ENCODE measurements at regions of chr14 and their contacts with region 1.

Region 1: GRCh38 chr14:68795597-68796417 is 2.9 kb upstream of the ZFP36L1 start:
- DNase-seq: peak; percentile 96
- ATAC-seq: peak; percentile 39
- H3K4me3 ChIP-seq: peak overlapping the region; percentile 59 to 100 (median 94)
- H3K4me3 Mint-ChIP-seq: peak overlapping the region; percentile 97
- H3K27ac ChIP-seq: peak overlapping the region; percentile 100
- H3K27ac Mint-ChIP-seq: peak overlapping the region; percentile 100
- H3K4me1 ChIP-seq: peaks cover 30 to 38% of the 10 kb centered on the region in 2 donors
- H3K4me1 Mint-ChIP-seq: peaks cover 36% of the 10 kb centered on the region
- H3K27me3 ChIP-seq: no peaks in the 10 kb centered on the region
- H3K27me3 Mint-ChIP-seq: no peaks in the 10 kb centered on the region
- CTCF ChIP-seq: peak; percentile 62

Region 2: DNA sequence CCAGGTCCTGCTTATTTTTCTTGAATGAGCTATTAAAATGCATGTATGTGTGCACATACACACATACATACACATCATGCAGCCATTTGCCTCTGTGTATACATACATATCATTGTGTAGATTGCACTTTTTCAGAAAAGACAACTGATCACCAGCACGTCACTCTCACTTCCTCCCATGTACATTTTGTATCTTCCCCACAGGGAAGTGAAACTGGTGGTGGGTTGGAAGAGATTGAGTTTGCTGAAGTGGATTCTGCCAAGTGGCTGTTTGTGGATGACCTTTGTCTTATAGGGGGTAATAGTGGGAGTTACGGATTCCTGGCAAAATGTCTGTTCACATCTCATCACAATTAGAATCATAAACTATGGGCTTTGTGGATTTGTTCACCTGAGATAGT is 527.6 kb before region 1 on chr14:
- CTCF ChIA-PET with region 1: interaction called, 4 read pairs
- POLR2A ChIA-PET with region 1: interaction called, 7 read pairs
- intact Hi-C with region 1: loop called (anchors 5 kb)
- DNase-seq: peak; percentile 92
- ATAC-seq: peak; percentile 71
- H3K4me3 ChIP-seq: peak overlapping the region in 1 of 5 experiments; percentile 14
- H3K4me3 Mint-ChIP-seq: peak overlapping the region; percentile 72
- H3K27ac ChIP-seq: peak overlapping the region; percentile 78 to 94
- H3K27ac Mint-ChIP-seq: peak overlapping the region; percentile 95
- H3K4me1 ChIP-seq: peaks cover 78 to 89% of the 10 kb centered on the region in 2 donors
- H3K4me1 Mint-ChIP-seq: peaks cover 80% of the 10 kb centered on the region
- H3K27me3 ChIP-seq: no peaks in the 10 kb centered on the region
- H3K27me3 Mint-ChIP-seq: no peaks in the 10 kb centered on the region
- CTCF ChIP-seq: no peak

Region 3: DNA sequence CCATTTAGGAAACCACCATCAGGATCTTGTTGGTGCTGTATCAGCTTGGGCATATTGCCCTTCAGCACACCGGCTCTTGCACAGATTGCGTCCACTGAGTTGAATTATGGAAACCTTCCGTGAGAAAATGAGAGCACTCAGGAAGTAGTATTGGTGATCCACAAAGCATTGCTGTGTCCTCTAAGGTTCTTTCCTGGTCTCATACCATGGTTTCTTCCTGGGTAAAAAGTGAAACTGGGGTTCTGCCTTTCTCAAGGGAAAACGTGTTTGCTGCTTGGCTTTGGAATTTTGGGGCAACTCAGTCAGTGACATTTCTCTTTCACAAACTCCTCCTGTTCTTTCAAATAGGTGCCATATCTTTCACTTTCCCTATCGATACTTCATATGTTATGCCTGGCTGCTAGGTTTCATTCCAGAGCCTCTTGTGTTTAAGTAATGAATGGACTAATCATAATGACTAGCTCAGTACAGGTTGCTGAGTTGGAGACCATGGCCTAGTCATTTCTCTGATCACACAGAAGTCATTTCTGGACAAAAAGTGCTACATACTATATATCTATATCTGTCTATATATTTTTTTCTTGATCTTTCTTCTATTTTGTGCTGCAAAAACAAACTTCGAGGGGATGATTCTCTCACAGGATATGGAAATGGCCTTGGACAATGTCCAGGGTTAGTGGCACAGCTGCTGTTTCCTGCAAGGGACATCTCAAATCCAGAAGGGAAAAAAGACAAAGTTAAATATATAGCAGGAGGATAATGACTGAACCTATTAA is 426.3 kb before region 1 on chr14:
- CTCF ChIA-PET with region 1: interaction called, 4 read pairs
- POLR2A ChIA-PET with region 1: interaction called, 8 read pairs
- intact Hi-C with region 1: loop called (anchors 5 kb)
- DNase-seq: peak; percentile 52
- ATAC-seq: peak; percentile 4
- H3K4me3 ChIP-seq: peak overlapping the region in 4 of 5 experiments; percentile 1 to 20 (median 14)
- H3K4me3 Mint-ChIP-seq: peak overlapping the region; percentile 73
- H3K27ac ChIP-seq: peak overlapping the region; percentile 78 to 84
- H3K27ac Mint-ChIP-seq: peak overlapping the region; percentile 97
- H3K4me1 ChIP-seq: peaks cover 78 to 92% of the 10 kb centered on the region in 2 donors
- H3K4me1 Mint-ChIP-seq: peaks cover 93% of the 10 kb centered on the region
- H3K27me3 ChIP-seq: no peaks in the 10 kb centered on the region
- H3K27me3 Mint-ChIP-seq: no peaks in the 10 kb centered on the region
- CTCF ChIP-seq: no peak

Region 4: GRCh38 chr14:68476212-68476907 is 319.4 kb before region 1 on chr14:
- CTCF ChIA-PET with region 1: no interaction called
- POLR2A ChIA-PET with region 1: interaction called, 15 read pairs
- intact Hi-C with region 1: no loop called
- DNase-seq: peak; percentile 89
- ATAC-seq: peak; percentile 90
- H3K4me3 ChIP-seq: peak overlapping the region in 1 of 5 experiments; percentile 21
- H3K4me3 Mint-ChIP-seq: peak overlapping the region; percentile 72
- H3K27ac ChIP-seq: peak overlapping the region; percentile 95 to 99
- H3K27ac Mint-ChIP-seq: peak overlapping the region; percentile 98
- H3K4me1 ChIP-seq: peaks cover 73 to 77% of the 10 kb centered on the region in 2 donors
- H3K4me1 Mint-ChIP-seq: peaks cover 84% of the 10 kb centered on the region
- H3K27me3 ChIP-seq: no peaks in the 10 kb centered on the region
- H3K27me3 Mint-ChIP-seq: no peaks in the 10 kb centered on the region
- CTCF ChIP-seq: no peak

Region 5: GRCh38 chr14:68718023-68718995 is 77.5 kb before region 1 on chr14:
- CTCF ChIA-PET with region 1: no interaction called
- POLR2A ChIA-PET with region 1: interaction called, 12 read pairs
- intact Hi-C with region 1: no loop called
- DNase-seq: no peak
- ATAC-seq: peak; percentile 58
- H3K4me3 ChIP-seq: no peak overlapping the region
- H3K4me3 Mint-ChIP-seq: no peak overlapping the region
- H3K27ac ChIP-seq: no peak overlapping the region
- H3K27ac Mint-ChIP-seq: no peak overlapping the region
- H3K4me1 ChIP-seq: peaks cover 0 to 3% of the 10 kb centered on the region in 2 donors
- H3K4me1 Mint-ChIP-seq: peaks cover 16% of the 10 kb centered on the region
- H3K27me3 ChIP-seq: no peaks in the 10 kb centered on the region
- H3K27me3 Mint-ChIP-seq: no peaks in the 10 kb centered on the region
- CTCF ChIP-seq: peak; percentile 44

Region 6: GRCh38 chr14:68843471-68844209 is 47.8 kb after region 1 on chr14:
- CTCF ChIA-PET with region 1: interaction called, 9 read pairs
- POLR2A ChIA-PET with region 1: no interaction called
- intact Hi-C with region 1: loop called (anchors 2 kb)
- DNase-seq: peak; percentile 80
- ATAC-seq: peak; percentile 82
- H3K4me3 ChIP-seq: peak overlapping the region in 3 of 5 experiments; percentile 18 to 50 (median 24)
- H3K4me3 Mint-ChIP-seq: peak overlapping the region; percentile 62
- H3K27ac ChIP-seq: no peak overlapping the region
- H3K27ac Mint-ChIP-seq: no peak overlapping the region
- H3K4me1 ChIP-seq: peaks cover 6 to 7% of the 10 kb centered on the region in 2 donors
- H3K4me1 Mint-ChIP-seq: peaks cover 14% of the 10 kb centered on the region
- H3K27me3 ChIP-seq: no peaks in the 10 kb centered on the region
- H3K27me3 Mint-ChIP-seq: peaks cover 6% of the 10 kb centered on the region
- CTCF ChIP-seq: peak; percentile 93

Region 7: GRCh38 chr14:69090187-69090789 is 294.5 kb after region 1 on chr14:
- CTCF ChIA-PET with region 1: no interaction called
- POLR2A ChIA-PET with region 1: no interaction called
- intact Hi-C with region 1: no loop called
- DNase-seq: peak; percentile 24
- ATAC-seq: no peak
- H3K4me3 ChIP-seq: no peak overlapping the region
- H3K4me3 Mint-ChIP-seq: no peak overlapping the region
- H3K27ac ChIP-seq: no peak overlapping the region
- H3K27ac Mint-ChIP-seq: no peak overlapping the region
- H3K4me1 ChIP-seq: no peaks in the 10 kb centered on the region
- H3K4me1 Mint-ChIP-seq: no peaks in the 10 kb centered on the region
- H3K27me3 ChIP-seq: no peaks in the 10 kb centered on the region
- H3K27me3 Mint-ChIP-seq: no peaks in the 10 kb centered on the region
- CTCF ChIP-seq: peak; percentile 58